ENCODE measurements at regions of chr11 and their contacts with region 1.

Region 1: DNA sequence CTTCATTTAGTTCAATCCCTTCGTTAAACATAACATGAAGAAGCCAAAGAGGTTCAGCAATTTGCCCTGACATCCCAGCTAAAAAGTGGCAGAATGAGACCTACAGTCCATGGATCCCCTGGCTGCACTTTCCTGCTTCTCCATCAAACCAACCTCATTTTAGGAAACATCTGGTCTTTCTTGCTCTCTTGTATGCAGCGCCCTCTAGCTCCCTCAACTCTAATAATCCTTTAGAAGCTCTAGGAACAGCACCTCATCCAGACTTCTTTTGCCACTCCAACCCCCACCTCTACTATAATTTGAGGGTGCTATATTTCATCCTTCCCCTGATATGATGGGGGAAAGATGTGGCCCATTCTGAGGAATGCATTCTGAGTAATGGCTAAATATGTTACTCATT is 7.4 kb downstream of the CNTF start:
- DNase-seq: no peak
- ATAC-seq: peak; percentile 86
- H3K4me3 ChIP-seq: no peak overlapping the region
- H3K27ac ChIP-seq: no peak overlapping the region
- H3K4me1 ChIP-seq: no peaks in the 10 kb centered on the region
- H3K27me3 ChIP-seq: no peaks in the 10 kb centered on the region
- CTCF ChIP-seq: peak; percentile 59 to 70 (median 66)
- EP300 ChIP-seq: no peak
- POLR2A ChIP-seq: no peak
- RAD21 ChIP-seq: peak; percentile 72

Region 2: DNA sequence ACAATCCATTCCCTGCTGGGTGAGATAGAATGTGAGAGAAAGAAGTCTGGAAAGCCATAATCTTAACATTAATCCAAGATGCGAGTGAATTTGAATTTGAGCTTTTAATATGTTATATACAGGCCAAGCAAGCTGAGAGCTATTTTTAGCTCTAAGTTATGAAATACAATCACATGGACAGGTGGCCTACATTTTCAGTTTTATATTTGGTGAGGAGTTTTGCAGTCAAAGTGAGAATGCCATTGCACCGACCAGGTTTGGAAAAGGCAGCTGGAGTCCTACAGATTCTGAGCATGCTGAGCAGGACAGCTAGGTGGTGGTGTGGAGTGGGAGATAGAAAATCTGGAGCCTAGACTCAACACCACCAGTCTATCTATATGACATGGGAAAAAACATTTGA is 134.0 kb before region 1 on chr11:
- CTCF ChIA-PET with region 1: no interaction called
- POLR2A ChIA-PET with region 1: no interaction called
- RAD21 ChIA-PET with region 1: no interaction called
- SMC1A ChIA-PET with region 1: no interaction called
- in situ Hi-C with region 1: no loop called
- intact Hi-C with region 1: no loop called
- DNase-seq: no peak
- ATAC-seq: peak; percentile 63
- H3K4me3 ChIP-seq: no peak overlapping the region
- H3K27ac ChIP-seq: no peak overlapping the region
- H3K4me1 ChIP-seq: peaks cover 9% of the 10 kb centered on the region; the same call in 1 of the 2 replicates
- H3K27me3 ChIP-seq: no peaks in the 10 kb centered on the region
- CTCF ChIP-seq: peak in 1 of 3 experiments; percentile 15; a peak in 2 of 6 replicates
- EP300 ChIP-seq: no peak
- POLR2A ChIP-seq: no peak
- RAD21 ChIP-seq: no peak

Region 3: DNA sequence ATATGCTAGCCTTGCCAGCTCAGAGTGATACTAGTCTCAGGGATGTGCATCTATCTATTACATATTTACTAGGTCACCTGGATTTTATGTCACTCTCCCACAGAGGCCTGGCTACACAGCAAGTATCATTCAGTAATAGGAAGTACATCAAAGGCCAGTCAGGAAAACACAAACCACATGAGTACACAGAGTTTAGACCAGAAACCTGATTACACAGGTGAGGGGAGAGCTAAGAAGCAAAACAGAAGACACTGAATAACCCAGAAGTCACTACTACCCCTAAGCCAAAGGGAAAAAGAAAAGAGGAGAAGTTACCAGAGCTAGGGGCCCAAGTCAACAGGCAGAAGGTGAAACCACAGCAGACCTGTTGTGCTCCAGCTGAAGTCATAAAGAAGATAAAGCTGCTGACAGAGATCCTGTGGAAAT is 67.5 kb before region 1 on chr11:
- CTCF ChIA-PET with region 1: interaction called, 156 read pairs
- POLR2A ChIA-PET with region 1: interaction called, 4 read pairs
- RAD21 ChIA-PET with region 1: interaction called, 61 read pairs
- SMC1A ChIA-PET with region 1: interaction called, 73 read pairs
- in situ Hi-C with region 1: no loop called
- intact Hi-C with region 1: loop called (anchors 5 kb)
- DNase-seq: no peak
- ATAC-seq: peak; percentile 76
- H3K4me3 ChIP-seq: no peak overlapping the region
- H3K27ac ChIP-seq: peak overlapping the region; percentile 37
- H3K4me1 ChIP-seq: peaks cover 19% of the 10 kb centered on the region
- H3K27me3 ChIP-seq: no peaks in the 10 kb centered on the region
- CTCF ChIP-seq: no peak
- EP300 ChIP-seq: peak in 1 of 2 experiments; percentile 19; a peak in 1 of 4 replicates
- POLR2A ChIP-seq: no peak
- RAD21 ChIP-seq: no peak

Region 4: GRCh38 chr11:58586998-58587397 is 42.9 kb before region 1 on chr11:
- CTCF ChIA-PET with region 1: interaction called, 110 read pairs
- POLR2A ChIA-PET with region 1: interaction called, 3 read pairs
- RAD21 ChIA-PET with region 1: interaction called, 11 read pairs
- SMC1A ChIA-PET with region 1: interaction called, 6 read pairs
- in situ Hi-C with region 1: no loop called
- intact Hi-C with region 1: no loop called
- DNase-seq: no peak
- ATAC-seq: peak; percentile 6
- H3K4me3 ChIP-seq: peak overlapping the region; percentile 2; the same call in 1 of the 2 replicates
- H3K27ac ChIP-seq: no peak overlapping the region
- H3K4me1 ChIP-seq: peaks cover 12% of the 10 kb centered on the region; the same call in 1 of the 2 replicates
- H3K27me3 ChIP-seq: no peaks in the 10 kb centered on the region
- CTCF ChIP-seq: no peak
- EP300 ChIP-seq: no peak
- POLR2A ChIP-seq: no peak
- RAD21 ChIP-seq: no peak

Region 5: DNA sequence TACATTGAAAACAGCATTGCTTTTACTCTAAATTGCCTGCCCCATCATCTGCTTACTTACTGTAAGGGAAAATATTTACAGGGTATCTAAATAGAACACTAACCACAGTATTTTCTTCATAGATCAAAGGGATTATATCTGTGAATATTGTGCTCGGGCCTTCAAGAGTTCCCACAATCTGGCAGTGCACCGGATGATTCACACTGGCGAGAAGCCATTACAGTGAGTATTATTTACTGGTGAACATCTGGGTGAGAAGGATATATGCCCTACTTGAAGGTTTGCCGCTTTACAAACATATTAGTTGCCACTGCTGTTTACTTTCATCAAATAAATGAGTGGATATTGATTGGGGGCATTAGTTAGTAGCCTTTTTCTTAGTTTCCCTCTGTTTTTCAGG is 13.3 kb before region 1 on chr11:
- CTCF ChIA-PET with region 1: interaction called, 42 read pairs
- POLR2A ChIA-PET with region 1: no interaction called
- RAD21 ChIA-PET with region 1: interaction called, 5 read pairs
- SMC1A ChIA-PET with region 1: interaction called, 10 read pairs
- in situ Hi-C with region 1: no loop called
- intact Hi-C with region 1: no loop called
- DNase-seq: no peak
- ATAC-seq: no peak
- H3K4me3 ChIP-seq: no peak overlapping the region
- H3K27ac ChIP-seq: no peak overlapping the region
- H3K4me1 ChIP-seq: no peaks in the 10 kb centered on the region
- H3K27me3 ChIP-seq: no peaks in the 10 kb centered on the region
- CTCF ChIP-seq: no peak
- EP300 ChIP-seq: no peak
- POLR2A ChIP-seq: no peak
- RAD21 ChIP-seq: no peak

Region 6: GRCh38 chr11:58654079-58654907 is 24.4 kb after region 1 on chr11:
- CTCF ChIA-PET with region 1: interaction called, 12 read pairs
- POLR2A ChIA-PET with region 1: interaction called, 3 read pairs
- RAD21 ChIA-PET with region 1: no interaction called
- SMC1A ChIA-PET with region 1: interaction called, 4 read pairs
- in situ Hi-C with region 1: no loop called
- intact Hi-C with region 1: no loop called
- DNase-seq: peak; percentile 38
- ATAC-seq: peak; percentile 98
- H3K4me3 ChIP-seq: no peak overlapping the region
- H3K27ac ChIP-seq: no peak overlapping the region
- H3K4me1 ChIP-seq: peaks cover 4% of the 10 kb centered on the region; the same call in 1 of the 2 replicates
- H3K27me3 ChIP-seq: no peaks in the 10 kb centered on the region
- CTCF ChIP-seq: peak; percentile 89 to 90 (median 89)
- EP300 ChIP-seq: no peak
- POLR2A ChIP-seq: no peak
- RAD21 ChIP-seq: peak; percentile 76

Region 7: DNA sequence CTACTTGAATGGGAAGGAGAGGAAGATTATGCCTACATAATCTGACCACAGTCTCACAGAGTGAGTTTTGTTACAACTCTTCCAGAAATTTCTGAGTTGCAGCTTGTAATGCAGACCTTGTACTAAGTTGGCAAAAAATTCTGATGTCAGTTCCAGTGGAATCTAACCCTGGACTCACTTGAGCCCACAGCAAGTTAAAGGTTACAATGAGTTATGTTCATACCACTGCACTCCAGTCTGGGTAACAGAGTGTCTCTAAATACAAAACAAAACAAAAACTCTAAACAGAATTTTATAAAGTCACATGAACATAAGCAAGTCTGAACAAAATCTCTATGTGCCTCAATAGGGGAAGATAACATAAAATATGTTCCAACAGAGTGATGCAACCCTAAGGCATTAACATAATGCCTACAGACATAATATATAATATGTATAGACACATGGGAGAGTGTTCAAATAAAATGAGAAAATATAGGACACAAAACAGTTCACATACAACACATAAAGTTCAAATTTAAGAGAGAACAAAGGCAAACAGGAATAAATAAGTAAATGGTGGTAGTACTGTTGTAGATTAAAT is 100.7 kb after region 1 on chr11:
- CTCF ChIA-PET with region 1: no interaction called
- POLR2A ChIA-PET with region 1: no interaction called
- RAD21 ChIA-PET with region 1: no interaction called
- SMC1A ChIA-PET with region 1: no interaction called
- in situ Hi-C with region 1: no loop called
- intact Hi-C with region 1: no loop called
- DNase-seq: no peak
- ATAC-seq: no peak
- H3K4me3 ChIP-seq: no peak overlapping the region
- H3K27ac ChIP-seq: no peak overlapping the region
- H3K4me1 ChIP-seq: no peaks in the 10 kb centered on the region
- H3K27me3 ChIP-seq: no peaks in the 10 kb centered on the region
- CTCF ChIP-seq: no peak
- EP300 ChIP-seq: no peak
- POLR2A ChIP-seq: no peak
- RAD21 ChIP-seq: no peak

Measured in GM12878 (cell line).